ENCODE measurements at regions of chr20 and their contacts with region 1.

Region 1: GRCh38 chr20:33999025-33999649 is 5.4 kb downstream of the RALY start:
- DNase-seq: no peak
- ATAC-seq: no peak
- H3K4me3 ChIP-seq: no peak overlapping the region
- H3K27ac ChIP-seq: no peak overlapping the region
- H3K4me1 ChIP-seq: peaks cover 43% of the 10 kb centered on the region
- H3K27me3 ChIP-seq: no peaks in the 10 kb centered on the region
- CTCF ChIP-seq: no peak

Region 2: GRCh38 chr20:34083137-34083536 is 84.0 kb after region 1 on chr20:
- CTCF ChIA-PET with region 1: no interaction called
- POLR2A ChIA-PET with region 1: interaction called, 10 read pairs
- in situ Hi-C with region 1: no loop called
- intact Hi-C with region 1: no loop called
- DNase-seq: no peak
- ATAC-seq: 0 out of 2 replicates have a peak, but pooled peaks have one; percentile 42
- H3K4me3 ChIP-seq: no peak overlapping the region
- H3K27ac ChIP-seq: no peak overlapping the region
- H3K4me1 ChIP-seq: no peaks in the 10 kb centered on the region
- H3K27me3 ChIP-seq: no peaks in the 10 kb centered on the region
- CTCF ChIP-seq: no peak